ENCODE measurements at regions of chr1 and their contacts with region 1.

Region 1: GRCh38 chr1:2875707-2876561 is 74.4 kb upstream of the TTC34 start:
- DNase-seq: peak; percentile 62 to 86
- ATAC-seq: peak; percentile 62
- H3K4me3 ChIP-seq: no peak overlapping the region
- H3K27ac ChIP-seq: no peak overlapping the region
- H3K4me1 ChIP-seq: no peaks in the 10 kb centered on the region
- H3K27me3 ChIP-seq: no peaks in the 10 kb centered on the region

Region 2: GRCh38 chr1:3060601-3061551 is 184.9 kb after region 1 on chr1:
- intact Hi-C with region 1: loop called in 1 of 2 experiments (anchors 5 kb)
- DNase-seq: peak in 1 of 2 donors; percentile 71
- ATAC-seq: no peak
- H3K4me3 ChIP-seq: no peak overlapping the region
- H3K27ac ChIP-seq: no peak overlapping the region
- H3K4me1 ChIP-seq: no peaks in the 10 kb centered on the region
- H3K27me3 ChIP-seq: no peaks in the 10 kb centered on the region

Region 3: DNA sequence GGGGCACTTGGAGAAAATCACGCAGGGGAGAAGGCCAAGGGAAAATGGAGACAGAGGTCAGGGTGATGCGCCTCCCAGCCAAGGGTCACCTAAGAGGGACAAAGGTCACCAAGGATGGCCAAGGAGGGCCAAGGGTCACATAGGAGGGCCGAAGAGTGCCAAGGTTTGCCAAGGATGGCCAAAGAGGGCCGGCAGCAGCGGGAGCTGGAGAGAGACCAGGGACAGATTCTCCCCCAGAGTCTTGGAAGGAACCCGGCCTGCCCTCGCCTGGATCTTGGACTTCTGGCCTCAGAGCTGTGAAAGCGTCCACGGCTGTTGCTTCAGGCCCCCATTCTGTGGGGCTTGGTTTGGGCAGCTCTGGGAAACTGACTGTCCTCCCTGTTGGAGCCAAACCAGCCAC is 553.0 kb after region 1 on chr1:
- intact Hi-C with region 1: loop called (anchors 5 kb)
- DNase-seq: peak in 1 of 2 donors; percentile 42
- ATAC-seq: no peak
- H3K4me3 ChIP-seq: no peak overlapping the region
- H3K27ac ChIP-seq: no peak overlapping the region
- H3K4me1 ChIP-seq: no peaks in the 10 kb centered on the region
- H3K27me3 ChIP-seq: no peaks in the 10 kb centered on the region

Measured in aorta (tissue), 5 donors.